B cell (primary cell): ENCODE measurements at regions of chr17 and their contacts with region 1.

Region 1: GRCh38 chr17:2511462-2512369 is at the start of gene METTL16:
- DNase-seq: peak; percentile 96
- ATAC-seq: peak; percentile 99
- H3K4me3 ChIP-seq: peak within 1 kb of the TSS; percentile 76 to 96 (median 88)
- H3K4me3 Mint-ChIP-seq: no peak within 1 kb of the TSS
- H3K27ac ChIP-seq: peak within 1 kb of the TSS; percentile 91 to 92
- H3K27ac Mint-ChIP-seq: no peak within 1 kb of the TSS
- H3K4me1 ChIP-seq: peaks cover 19 to 20% of the 10 kb centered on the region in 2 donors
- H3K4me1 Mint-ChIP-seq: peaks cover 21% of the 10 kb centered on the region
- H3K27me3 ChIP-seq: no peaks in the 10 kb centered on the region
- H3K27me3 Mint-ChIP-seq: no peaks in the 10 kb centered on the region
- CTCF ChIP-seq: no peak
- total RNA-seq, gene METTL16: 52.9 and 56.5 TPM in 2 replicates

Region 2: DNA sequence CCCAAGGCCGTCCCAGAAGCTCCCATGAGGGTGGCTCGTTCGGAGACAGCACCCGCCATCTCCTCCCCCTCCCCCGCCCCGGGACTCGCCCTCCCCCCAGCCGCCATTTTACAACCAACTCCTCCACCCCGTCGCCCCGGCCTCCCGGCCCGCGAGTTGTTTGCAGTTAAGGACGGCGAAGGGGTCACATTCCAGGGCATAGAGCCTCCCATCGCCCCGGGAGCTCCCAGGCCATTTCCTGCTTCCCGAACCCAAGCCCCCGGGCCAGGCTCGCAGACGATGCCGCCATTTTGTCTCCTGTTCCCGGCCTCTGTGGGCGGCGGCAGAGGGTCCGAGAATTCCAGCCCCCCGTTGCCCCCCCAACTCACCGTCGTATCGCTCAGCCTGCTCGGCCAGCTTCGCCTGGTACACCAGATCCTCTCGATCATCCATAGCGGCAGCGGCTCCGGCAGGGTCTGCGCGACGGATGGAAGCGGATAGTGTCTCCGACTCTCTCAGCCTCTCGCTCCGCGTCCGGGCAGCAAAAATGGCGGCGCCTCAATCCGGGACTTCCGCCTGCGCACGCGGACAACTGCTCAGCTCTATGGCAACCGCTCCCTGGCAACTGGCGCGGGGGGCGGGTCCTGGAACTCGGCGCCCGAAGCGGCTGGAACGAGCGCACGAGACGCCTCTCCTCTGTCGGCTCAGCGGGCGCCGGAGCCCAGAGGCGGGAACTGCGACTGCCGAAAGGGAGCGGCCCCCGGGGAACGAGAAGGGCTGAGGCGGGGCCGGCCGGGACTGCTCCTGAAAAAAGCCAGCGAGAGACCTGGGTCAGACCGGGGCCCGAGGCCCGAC is 1111.8 kb before region 1 on chr17 and contains the start of gene YWHAE:
- CTCF ChIA-PET with region 1: no interaction called
- POLR2A ChIA-PET with region 1: interaction called, 11 read pairs
- intact Hi-C with region 1: no loop called
- DNase-seq: peak; percentile 96
- ATAC-seq: peak; percentile 81
- H3K4me3 ChIP-seq: peak within 1 kb of the TSS; percentile 75 to 94 (median 85)
- H3K4me3 Mint-ChIP-seq: peak within 1 kb of the TSS; percentile 100
- H3K27ac ChIP-seq: peak within 1 kb of the TSS; percentile 84 to 94
- H3K27ac Mint-ChIP-seq: peak within 1 kb of the TSS; percentile 99
- H3K4me1 ChIP-seq: peaks cover 20 to 35% of the 10 kb centered on the region in 2 donors
- H3K4me1 Mint-ChIP-seq: peaks cover 32% of the 10 kb centered on the region
- H3K27me3 ChIP-seq: no peaks in the 10 kb centered on the region
- H3K27me3 Mint-ChIP-seq: no peaks in the 10 kb centered on the region
- CTCF ChIP-seq: no peak
- total RNA-seq, gene YWHAE: 149 and 151 TPM in 2 replicates

Region 3: GRCh38 chr17:2303204-2304188 is 208.2 kb before region 1 on chr17 and contains the starts of genes SMG6 and SRR:
- CTCF ChIA-PET with region 1: no interaction called
- POLR2A ChIA-PET with region 1: no interaction called
- intact Hi-C with region 1: loop called (anchors 5 kb)
- DNase-seq: peak; percentile 96
- ATAC-seq: peak; percentile 89
- H3K4me3 ChIP-seq: peak within 1 kb of the TSS; percentile 78 to 98 (median 95)
- H3K4me3 Mint-ChIP-seq: peak within 1 kb of the TSS; percentile 91
- H3K27ac ChIP-seq: peak within 1 kb of the TSS; percentile 49 to 85
- H3K27ac Mint-ChIP-seq: peak within 1 kb of the TSS; percentile 85
- H3K4me1 ChIP-seq: peaks cover 6 to 19% of the 10 kb centered on the region in 2 donors
- H3K4me1 Mint-ChIP-seq: peaks cover 11% of the 10 kb centered on the region
- H3K27me3 ChIP-seq: no peaks in the 10 kb centered on the region
- H3K27me3 Mint-ChIP-seq: no peaks in the 10 kb centered on the region
- CTCF ChIP-seq: no peak
- total RNA-seq, gene SMG6: 35.5 and 41.8 TPM in 2 replicates
- total RNA-seq, gene SRR: 5.1 and 10.1 TPM in 2 replicates

Region 4: DNA sequence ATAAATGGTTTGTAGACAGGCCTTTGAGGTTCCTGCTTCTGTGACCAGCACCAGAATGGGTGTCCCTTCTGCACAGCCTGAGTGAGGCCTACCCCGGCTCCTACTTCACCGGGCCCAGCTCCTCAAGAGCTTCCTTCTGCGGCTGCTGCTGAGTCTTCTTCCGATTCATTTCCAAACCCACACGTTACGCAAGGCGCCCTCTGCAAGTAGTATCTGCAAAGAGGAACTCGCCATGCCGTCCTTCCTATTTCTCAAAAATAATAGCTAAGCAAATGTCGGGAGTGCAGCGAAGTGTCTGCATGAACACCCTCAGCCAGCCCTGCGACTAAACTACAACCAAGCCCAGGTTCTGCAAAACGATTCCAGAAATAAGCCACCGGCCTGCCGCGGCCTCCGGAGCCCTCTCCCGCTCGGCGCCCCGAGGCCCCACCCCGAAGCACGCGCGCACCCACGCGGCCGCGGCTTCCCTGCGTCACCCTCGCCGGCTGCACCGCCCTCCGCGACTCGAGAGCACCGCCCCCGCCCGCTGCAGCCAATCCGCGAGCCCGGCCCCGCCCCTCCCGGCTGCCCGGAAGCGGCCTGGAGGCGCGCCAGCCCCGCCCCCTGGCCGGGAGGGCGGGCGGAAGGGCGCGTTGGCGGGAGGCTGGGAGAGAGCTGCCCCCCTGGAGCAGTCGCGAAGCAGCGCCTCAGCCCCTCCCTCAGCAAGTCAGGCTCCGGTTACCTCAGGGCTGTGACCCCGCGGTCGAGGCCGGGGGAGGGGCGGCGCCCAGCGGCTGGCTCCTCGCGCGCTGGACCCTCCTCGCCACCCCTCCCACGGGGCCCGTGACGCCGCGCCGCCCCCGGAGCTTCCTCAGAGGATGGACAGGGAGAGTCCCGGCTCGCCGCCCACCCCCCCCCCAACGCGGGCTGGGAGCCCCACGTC is 119.2 kb before region 1 on chr17:
- CTCF ChIA-PET with region 1: no interaction called
- POLR2A ChIA-PET with region 1: no interaction called
- intact Hi-C with region 1: loop called (anchors 5 kb)
- DNase-seq: peak; percentile 98
- ATAC-seq: peak; percentile 70
- H3K4me3 ChIP-seq: peak overlapping the region; percentile 35 to 98 (median 85)
- H3K4me3 Mint-ChIP-seq: peak overlapping the region; percentile 97
- H3K27ac ChIP-seq: peak overlapping the region; percentile 97 to 99
- H3K27ac Mint-ChIP-seq: peak overlapping the region; percentile 96
- H3K4me1 ChIP-seq: peaks cover 44 to 58% of the 10 kb centered on the region in 2 donors
- H3K4me1 Mint-ChIP-seq: peaks cover 58% of the 10 kb centered on the region
- H3K27me3 ChIP-seq: no peaks in the 10 kb centered on the region
- H3K27me3 Mint-ChIP-seq: no peaks in the 10 kb centered on the region
- CTCF ChIP-seq: no peak

Region 5: GRCh38 chr17:2672026-2672425 is 160.3 kb after region 1 on chr17:
- CTCF ChIA-PET with region 1: interaction called, 19 read pairs
- POLR2A ChIA-PET with region 1: no interaction called
- intact Hi-C with region 1: loop called (anchors 10 kb)
- DNase-seq: no peak
- ATAC-seq: no peak
- H3K4me3 ChIP-seq: no peak overlapping the region
- H3K4me3 Mint-ChIP-seq: no peak overlapping the region
- H3K27ac ChIP-seq: peak overlapping the region in 1 of 2 donors; percentile 9
- H3K27ac Mint-ChIP-seq: no peak overlapping the region
- H3K4me1 ChIP-seq: no peaks in the 10 kb centered on the region
- H3K4me1 Mint-ChIP-seq: peaks cover 3% of the 10 kb centered on the region
- H3K27me3 ChIP-seq: no peaks in the 10 kb centered on the region
- H3K27me3 Mint-ChIP-seq: no peaks in the 10 kb centered on the region
- CTCF ChIP-seq: no peak